Endothelial cell of umbilical vein (primary cell): ENCODE measurements at regions of chr1 and their contacts with region 1.

Region 1: DNA sequence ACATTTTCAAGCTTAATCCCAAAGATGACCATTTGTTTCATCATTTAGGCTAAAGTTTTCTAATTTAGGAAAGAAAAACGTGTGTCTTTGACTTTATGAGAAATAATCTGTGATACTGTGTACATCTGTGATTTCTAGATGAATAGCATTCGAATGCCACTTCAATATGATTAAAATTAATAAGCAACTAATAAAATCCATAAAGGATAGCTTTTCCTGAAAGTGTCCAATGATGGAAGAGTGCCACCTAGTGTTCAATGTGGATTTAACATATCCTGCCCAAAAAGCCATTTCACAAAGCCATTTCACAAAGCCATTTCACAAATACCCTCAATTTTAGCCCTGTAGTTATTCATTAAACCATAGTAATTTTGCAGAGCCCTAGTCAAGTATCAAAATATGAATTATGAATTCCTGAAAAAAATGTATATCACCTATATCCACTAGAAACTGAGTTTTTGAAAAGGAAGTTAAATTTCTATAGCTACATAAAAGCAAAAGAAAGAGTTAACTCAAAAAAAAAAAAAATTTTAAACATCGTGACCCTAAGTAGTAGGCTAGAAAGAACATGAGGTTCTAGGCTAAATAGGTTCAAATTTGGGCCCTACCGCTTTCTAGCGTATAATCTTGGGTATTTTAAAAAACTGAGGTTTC is 19.1 kb downstream of the NME7 start:
- DNase-seq: peak; percentile 74
- H3K4me3 ChIP-seq: no peak overlapping the region
- H3K27ac ChIP-seq: no peak overlapping the region
- H3K4me1 ChIP-seq: no peaks in the 10 kb centered on the region
- H3K27me3 ChIP-seq: no peaks in the 10 kb centered on the region
- CTCF ChIP-seq: peak; percentile 40 to 43
- POLR2A ChIP-seq: no peak

Region 2: GRCh38 chr1:168439456-168440375 is 908.8 kb before region 1 on chr1:
- CTCF ChIA-PET with region 1: interaction called, 32 read pairs
- POLR2A ChIA-PET with region 1: no interaction called
- dilution Hi-C with region 1: no loop called
- intact Hi-C with region 1: no loop called
- DNase-seq: peak; percentile 63
- H3K4me3 ChIP-seq: no peak overlapping the region
- H3K27ac ChIP-seq: no peak overlapping the region
- H3K4me1 ChIP-seq: no peaks in the 10 kb centered on the region
- H3K27me3 ChIP-seq: no peaks in the 10 kb centered on the region
- CTCF ChIP-seq: peak; percentile 69 to 74
- POLR2A ChIP-seq: no peak

Region 3: GRCh38 chr1:168637350-168637991 is 711.0 kb before region 1 on chr1:
- CTCF ChIA-PET with region 1: interaction called, 190 read pairs
- POLR2A ChIA-PET with region 1: interaction called, 10 read pairs
- dilution Hi-C with region 1: no loop called
- intact Hi-C with region 1: loop called (anchors 1 kb)
- DNase-seq: peak; percentile 28
- H3K4me3 ChIP-seq: no peak overlapping the region
- H3K27ac ChIP-seq: no peak overlapping the region
- H3K4me1 ChIP-seq: no peaks in the 10 kb centered on the region
- H3K27me3 ChIP-seq: no peaks in the 10 kb centered on the region
- CTCF ChIP-seq: peak; percentile 67 to 74
- POLR2A ChIP-seq: no peak

Region 4: DNA sequence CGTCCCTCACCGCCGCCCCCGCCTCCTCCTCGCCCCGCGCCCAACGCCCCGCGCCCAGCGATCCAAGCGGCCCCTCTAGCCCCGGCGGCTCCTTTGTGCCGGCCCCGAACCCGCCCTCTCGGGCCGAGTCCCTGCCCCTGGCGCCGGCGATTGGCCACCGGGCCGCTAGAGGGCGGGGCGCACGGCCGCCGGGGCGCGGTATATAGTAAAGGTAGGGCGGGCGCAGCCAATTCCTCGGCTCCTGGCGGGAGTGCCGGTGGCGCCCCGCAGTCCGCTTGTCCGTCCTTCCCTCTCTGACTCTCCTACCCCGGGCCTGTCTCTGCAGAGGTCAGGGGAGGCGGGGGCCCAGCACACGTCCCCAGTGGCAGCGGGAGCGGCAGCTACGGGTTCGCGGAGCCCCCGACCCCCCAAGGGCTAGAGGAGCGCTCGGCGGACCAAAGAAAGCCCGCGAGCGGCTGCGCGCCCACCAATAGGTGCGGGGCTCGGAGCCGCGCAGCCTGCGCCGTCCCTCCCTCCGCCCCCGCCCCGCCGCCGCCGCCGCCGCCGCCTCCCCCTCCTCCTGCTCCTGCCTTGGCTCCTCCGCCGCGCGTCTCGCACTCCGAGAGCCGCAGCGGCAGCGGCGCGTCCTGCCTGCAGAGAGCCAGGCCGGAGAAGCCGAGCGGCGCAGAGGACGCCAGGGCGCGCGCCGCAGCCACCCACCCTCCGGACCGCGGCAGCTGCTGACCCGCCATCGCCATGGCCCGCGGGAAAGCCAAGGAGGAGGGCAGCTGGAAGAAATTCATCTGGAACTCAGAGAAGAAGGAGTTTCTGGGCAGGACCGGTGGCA is 242.2 kb before region 1 on chr1 and contains the start of gene ATP1B1:
- CTCF ChIA-PET with region 1: interaction called, 41 read pairs
- POLR2A ChIA-PET with region 1: no interaction called
- dilution Hi-C with region 1: no loop called
- intact Hi-C with region 1: loop called (anchors 1 kb)
- DNase-seq: peak; percentile 87
- H3K4me3 ChIP-seq: peak within 1 kb of the TSS; percentile 89 to 99 (median 94)
- H3K27ac ChIP-seq: peak within 1 kb of the TSS; percentile 89
- H3K4me1 ChIP-seq: peaks cover 35% of the 10 kb centered on the region
- H3K27me3 ChIP-seq: no peaks in the 10 kb centered on the region
- CTCF ChIP-seq: peak in 1 of 2 donors; percentile 44
- POLR2A ChIP-seq: peak; percentile 90
- total RNA-seq, gene ATP1B1: 56.1 and 60.5 TPM in 2 replicates

Region 5: GRCh38 chr1:169271098-169271497 is 77.4 kb before region 1 on chr1:
- CTCF ChIA-PET with region 1: no interaction called
- POLR2A ChIA-PET with region 1: no interaction called
- dilution Hi-C with region 1: no loop called
- intact Hi-C with region 1: no loop called
- DNase-seq: no peak
- H3K4me3 ChIP-seq: no peak overlapping the region
- H3K27ac ChIP-seq: no peak overlapping the region
- H3K4me1 ChIP-seq: no peaks in the 10 kb centered on the region
- H3K27me3 ChIP-seq: no peaks in the 10 kb centered on the region
- CTCF ChIP-seq: no peak
- POLR2A ChIP-seq: no peak

Region 6: DNA sequence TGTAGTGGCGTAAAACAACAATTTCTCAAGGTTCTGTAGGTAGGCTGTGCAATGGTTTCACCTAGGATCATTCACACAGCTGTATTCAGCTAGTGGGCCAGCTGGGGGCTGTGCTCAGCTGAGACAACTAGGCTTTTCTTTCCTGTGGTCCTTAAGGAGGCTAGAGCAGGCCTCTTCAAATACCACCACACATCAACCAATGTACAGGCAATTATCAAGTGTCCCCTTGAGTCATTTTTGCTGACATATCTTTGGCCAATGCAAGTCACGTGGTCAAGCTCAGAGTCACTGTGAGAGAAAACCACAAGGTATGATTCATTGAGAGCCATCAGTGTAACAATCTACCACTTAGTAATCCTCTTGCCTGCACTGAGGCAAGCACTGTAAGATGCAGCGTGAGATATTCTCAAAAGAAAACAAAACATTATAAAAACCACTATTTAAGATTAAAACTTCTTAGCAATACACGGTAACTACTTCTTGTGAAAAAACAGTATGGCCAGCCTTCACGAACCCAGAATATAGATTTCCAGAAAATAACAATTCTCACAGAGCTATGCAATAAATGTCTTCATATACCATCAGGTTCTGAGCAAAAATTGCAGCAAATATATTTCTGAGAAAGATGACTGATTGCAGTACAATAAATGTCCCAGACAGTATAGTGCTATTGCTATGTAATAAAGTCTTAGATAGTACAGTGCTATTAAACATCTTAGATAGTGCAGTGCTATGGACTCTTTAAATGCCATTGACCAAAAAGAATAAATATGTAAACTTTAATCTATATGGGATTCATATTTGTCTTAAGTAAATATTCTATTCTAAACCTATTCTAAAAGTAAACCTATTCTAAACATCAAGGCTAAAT is 36.2 kb before region 1 on chr1:
- CTCF ChIA-PET with region 1: interaction called, 12 read pairs
- POLR2A ChIA-PET with region 1: no interaction called
- dilution Hi-C with region 1: no loop called
- intact Hi-C with region 1: no loop called
- DNase-seq: peak; percentile 47
- H3K4me3 ChIP-seq: no peak overlapping the region
- H3K27ac ChIP-seq: no peak overlapping the region
- H3K4me1 ChIP-seq: no peaks in the 10 kb centered on the region
- H3K27me3 ChIP-seq: no peaks in the 10 kb centered on the region
- CTCF ChIP-seq: no peak
- POLR2A ChIP-seq: no peak

Region 7: DNA sequence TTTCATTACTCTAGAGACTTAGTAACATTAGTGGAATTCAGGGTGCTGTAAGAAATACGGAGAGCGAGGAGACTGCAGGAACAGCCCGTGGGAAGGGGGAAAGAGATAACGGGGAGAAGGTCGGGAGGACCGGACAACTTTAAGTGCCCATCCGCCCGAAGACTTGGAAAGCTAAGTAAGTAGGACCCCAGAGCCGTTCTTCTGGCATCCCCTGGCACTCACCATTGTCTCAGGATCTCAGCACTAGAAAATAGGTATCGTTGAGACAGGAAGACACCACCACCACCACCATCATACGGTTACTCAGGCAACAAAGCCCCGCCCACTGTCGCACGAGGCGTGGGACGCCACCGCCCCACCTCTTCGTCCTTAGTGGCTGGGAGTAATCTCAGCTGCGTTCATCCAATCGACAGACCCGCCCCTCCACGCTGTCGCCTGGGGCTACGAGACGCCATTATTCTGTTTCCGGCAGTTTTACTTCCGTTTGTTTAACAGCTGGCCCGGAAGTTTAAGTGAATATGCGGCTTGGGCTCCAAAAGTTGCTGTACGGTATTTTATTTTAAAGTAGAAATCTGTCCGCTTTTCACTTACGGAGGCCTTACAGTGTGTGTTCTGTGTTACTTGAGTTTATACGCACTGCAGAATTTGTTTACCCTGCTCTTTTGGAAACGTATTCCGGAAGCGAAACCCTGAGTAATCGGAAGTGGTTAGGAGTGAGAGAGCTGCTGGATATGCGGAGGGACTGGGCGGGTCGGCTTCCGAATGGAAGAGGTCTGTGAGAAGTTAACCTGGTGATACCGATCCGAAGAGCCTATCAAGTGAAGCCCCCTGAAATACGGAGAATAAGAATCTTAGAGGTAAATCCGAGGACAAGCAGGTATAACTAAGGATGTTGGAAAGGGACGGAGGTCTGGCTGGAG is 19.2 kb after region 1 on chr1 and contains the starts of genes BLZF1 and NME7:
- CTCF ChIA-PET with region 1: interaction called, 16 read pairs
- POLR2A ChIA-PET with region 1: no interaction called
- dilution Hi-C with region 1: no loop called
- intact Hi-C with region 1: no loop called
- DNase-seq: peak; percentile 98
- H3K4me3 ChIP-seq: peak within 1 kb of the TSS; percentile 97 to 100 (median 98)
- H3K27ac ChIP-seq: peak within 1 kb of the TSS; percentile 96
- H3K4me1 ChIP-seq: peaks cover 19% of the 10 kb centered on the region
- H3K27me3 ChIP-seq: no peaks in the 10 kb centered on the region
- CTCF ChIP-seq: no peak
- POLR2A ChIP-seq: peak; percentile 84
- total RNA-seq, gene BLZF1: 19.7 and 21.2 TPM in 2 replicates
- total RNA-seq, gene NME7: 25.0 and 25.3 TPM in 2 replicates

Region 8: GRCh38 chr1:169534653-169535052 is 186.1 kb after region 1 on chr1:
- CTCF ChIA-PET with region 1: no interaction called
- POLR2A ChIA-PET with region 1: no interaction called
- dilution Hi-C with region 1: no loop called
- intact Hi-C with region 1: no loop called
- DNase-seq: no peak
- H3K4me3 ChIP-seq: no peak overlapping the region
- H3K27ac ChIP-seq: no peak overlapping the region
- H3K4me1 ChIP-seq: no peaks in the 10 kb centered on the region
- H3K27me3 ChIP-seq: no peaks in the 10 kb centered on the region
- CTCF ChIP-seq: no peak
- POLR2A ChIP-seq: no peak